ENCODE measurements at regions of chr21 and their contacts with region 1.

Region 1: DNA sequence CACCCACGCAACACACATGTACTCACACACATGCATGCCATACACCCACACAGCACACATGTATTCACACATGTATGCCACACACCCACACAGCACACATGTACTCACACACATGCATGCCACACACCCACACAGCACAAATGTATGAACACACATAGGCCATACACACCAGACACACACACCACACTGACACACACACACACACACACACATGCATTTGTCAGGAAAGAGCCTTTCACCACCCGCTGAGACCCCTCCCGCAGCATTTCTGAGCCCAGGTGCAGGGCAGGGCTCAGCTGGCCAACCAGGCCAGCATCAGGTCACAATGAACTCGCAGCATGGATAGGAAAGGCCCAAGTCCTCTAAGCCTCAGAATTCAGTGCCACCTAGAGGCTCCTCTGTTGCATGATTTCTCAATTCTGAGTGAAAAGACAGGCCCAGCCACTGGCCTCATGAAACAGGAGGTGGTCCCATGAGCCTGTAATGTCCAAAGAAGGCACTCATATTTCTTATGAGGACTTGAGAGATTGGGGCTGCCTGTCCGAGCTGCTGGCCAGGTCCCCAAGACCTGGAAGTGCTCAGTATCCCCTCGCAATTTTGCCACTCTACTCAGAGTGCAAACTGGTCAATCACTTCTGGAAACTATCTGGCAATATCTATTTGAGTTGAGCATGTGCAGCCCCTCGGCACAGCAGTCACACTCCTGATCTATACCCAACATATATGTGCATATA is 57.3 kb downstream of the PSMG1 start:
- DNase-seq: peak; percentile 41
- ATAC-seq: no peak
- H3K4me3 Mint-ChIP-seq: no peak overlapping the region
- H3K27ac Mint-ChIP-seq: no peak overlapping the region
- H3K4me1 Mint-ChIP-seq: peaks cover 7% of the 10 kb centered on the region
- H3K27me3 Mint-ChIP-seq: peaks cover 15% of the 10 kb centered on the region

Region 2: DNA sequence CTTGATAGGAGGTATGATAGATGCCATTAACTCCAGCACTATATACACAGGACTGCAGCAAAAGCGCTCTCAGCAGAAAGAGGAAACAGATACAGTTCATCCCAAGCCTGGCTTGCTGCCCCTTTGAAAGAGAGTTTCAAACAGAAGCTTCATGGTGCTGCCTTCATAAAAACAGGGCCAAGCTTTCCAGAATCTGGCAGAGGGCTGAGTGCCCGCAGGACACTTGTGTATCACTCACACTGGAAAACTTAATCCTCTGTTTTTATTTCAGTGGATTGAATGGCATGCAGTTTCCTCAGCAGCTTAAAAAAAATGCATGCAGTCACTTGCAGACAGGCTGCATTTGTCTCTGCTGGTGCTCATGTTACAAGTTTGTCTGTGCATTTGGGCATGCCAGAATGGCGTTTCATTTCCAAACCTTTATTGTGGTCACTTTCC is 828.7 kb before region 1 on chr21:
- CTCF ChIA-PET with region 1: no interaction called
- DNase-seq: no peak
- ATAC-seq: no peak
- H3K4me3 Mint-ChIP-seq: no peak overlapping the region
- H3K27ac Mint-ChIP-seq: no peak overlapping the region
- H3K4me1 Mint-ChIP-seq: peaks cover 4% of the 10 kb centered on the region
- H3K27me3 Mint-ChIP-seq: no peaks in the 10 kb centered on the region

Region 3: GRCh38 chr21:38733973-38734546 is 391.9 kb before region 1 on chr21:
- CTCF ChIA-PET with region 1: interaction called, 11 read pairs
- DNase-seq: peak; percentile 74
- ATAC-seq: peak; percentile 65
- H3K4me3 Mint-ChIP-seq: peak overlapping the region; percentile 63
- H3K27ac Mint-ChIP-seq: no peak overlapping the region
- H3K4me1 Mint-ChIP-seq: peaks cover 6% of the 10 kb centered on the region
- H3K27me3 Mint-ChIP-seq: peaks cover 36% of the 10 kb centered on the region

Region 4: GRCh38 chr21:38755681-38756371 is 370.1 kb before region 1 on chr21:
- CTCF ChIA-PET with region 1: no interaction called
- DNase-seq: no peak
- ATAC-seq: no peak
- H3K4me3 Mint-ChIP-seq: no peak overlapping the region
- H3K27ac Mint-ChIP-seq: no peak overlapping the region
- H3K4me1 Mint-ChIP-seq: peaks cover 6% of the 10 kb centered on the region
- H3K27me3 Mint-ChIP-seq: peaks cover 11% of the 10 kb centered on the region

Region 5: DNA sequence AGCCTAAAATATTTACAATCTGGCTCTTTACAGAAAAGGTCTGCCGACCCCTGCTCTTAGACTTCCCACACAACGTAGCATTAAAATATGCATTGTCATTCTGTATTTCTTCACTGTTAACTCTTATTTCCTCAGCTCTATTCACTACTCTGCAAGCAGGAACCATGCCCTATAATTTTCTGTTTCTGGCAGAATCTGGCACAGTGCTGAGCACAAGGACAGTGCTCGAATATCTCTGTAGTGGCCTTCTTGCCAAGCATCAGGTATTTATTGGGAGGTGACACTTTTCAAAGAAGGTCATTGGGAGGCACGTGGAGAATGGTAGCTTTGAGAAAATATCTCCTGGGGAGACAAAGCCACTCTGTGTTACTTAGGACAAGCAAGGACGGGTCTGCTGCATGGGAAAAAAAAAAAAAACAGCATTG is 20.6 kb before region 1 on chr21:
- CTCF ChIA-PET with region 1: no interaction called
- DNase-seq: no peak
- ATAC-seq: no peak
- H3K4me3 Mint-ChIP-seq: no peak overlapping the region
- H3K27ac Mint-ChIP-seq: no peak overlapping the region
- H3K4me1 Mint-ChIP-seq: no peaks in the 10 kb centered on the region
- H3K27me3 Mint-ChIP-seq: peaks cover 24% of the 10 kb centered on the region

Region 6: DNA sequence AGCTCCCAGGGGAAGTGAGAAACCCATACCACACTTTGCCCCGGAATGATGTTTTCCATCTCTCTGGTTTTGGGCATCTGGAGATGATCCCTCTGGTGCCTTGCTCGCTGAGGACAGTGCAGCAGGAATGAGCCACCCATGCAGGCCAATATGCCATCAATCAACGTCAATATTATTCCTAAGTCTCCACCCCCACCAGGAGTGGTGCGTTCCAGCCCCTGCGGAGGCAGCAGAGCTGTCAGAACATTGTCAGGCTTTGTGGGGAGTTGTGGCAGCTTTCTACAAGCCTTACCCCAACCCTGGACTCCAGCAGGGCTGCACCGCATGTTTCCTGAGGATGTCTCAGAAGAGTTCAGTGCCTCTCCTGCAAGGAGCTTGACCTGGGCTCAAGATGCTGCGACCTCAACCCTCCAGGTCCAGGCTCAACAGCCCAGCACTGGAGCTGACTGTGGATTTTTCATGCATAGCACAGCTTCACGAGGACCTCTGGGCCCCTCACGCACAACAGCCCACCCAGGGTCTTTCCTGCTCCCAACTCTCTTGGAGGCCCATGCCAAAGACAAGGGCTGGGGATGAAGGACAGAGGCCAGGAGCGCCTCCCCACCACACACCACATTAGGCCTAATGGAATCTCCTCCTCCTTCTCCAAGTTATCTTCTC is 10.2 kb before region 1 on chr21:
- CTCF ChIA-PET with region 1: no interaction called
- DNase-seq: peak; percentile 25
- ATAC-seq: no peak
- H3K4me3 Mint-ChIP-seq: no peak overlapping the region
- H3K27ac Mint-ChIP-seq: no peak overlapping the region
- H3K4me1 Mint-ChIP-seq: no peaks in the 10 kb centered on the region
- H3K27me3 Mint-ChIP-seq: peaks cover 3% of the 10 kb centered on the region

Measured in activated CD8-positive, alpha-beta memory T cell treated with anti-CD3 and anti-CD28 coated beads, Interleukin-2, amount 10 ng/mL, durations not matched to agents 7 days and 5 days (primary cell).